ENCODE measurements at regions of chr19 and their contacts with region 1.

Region 1: DNA sequence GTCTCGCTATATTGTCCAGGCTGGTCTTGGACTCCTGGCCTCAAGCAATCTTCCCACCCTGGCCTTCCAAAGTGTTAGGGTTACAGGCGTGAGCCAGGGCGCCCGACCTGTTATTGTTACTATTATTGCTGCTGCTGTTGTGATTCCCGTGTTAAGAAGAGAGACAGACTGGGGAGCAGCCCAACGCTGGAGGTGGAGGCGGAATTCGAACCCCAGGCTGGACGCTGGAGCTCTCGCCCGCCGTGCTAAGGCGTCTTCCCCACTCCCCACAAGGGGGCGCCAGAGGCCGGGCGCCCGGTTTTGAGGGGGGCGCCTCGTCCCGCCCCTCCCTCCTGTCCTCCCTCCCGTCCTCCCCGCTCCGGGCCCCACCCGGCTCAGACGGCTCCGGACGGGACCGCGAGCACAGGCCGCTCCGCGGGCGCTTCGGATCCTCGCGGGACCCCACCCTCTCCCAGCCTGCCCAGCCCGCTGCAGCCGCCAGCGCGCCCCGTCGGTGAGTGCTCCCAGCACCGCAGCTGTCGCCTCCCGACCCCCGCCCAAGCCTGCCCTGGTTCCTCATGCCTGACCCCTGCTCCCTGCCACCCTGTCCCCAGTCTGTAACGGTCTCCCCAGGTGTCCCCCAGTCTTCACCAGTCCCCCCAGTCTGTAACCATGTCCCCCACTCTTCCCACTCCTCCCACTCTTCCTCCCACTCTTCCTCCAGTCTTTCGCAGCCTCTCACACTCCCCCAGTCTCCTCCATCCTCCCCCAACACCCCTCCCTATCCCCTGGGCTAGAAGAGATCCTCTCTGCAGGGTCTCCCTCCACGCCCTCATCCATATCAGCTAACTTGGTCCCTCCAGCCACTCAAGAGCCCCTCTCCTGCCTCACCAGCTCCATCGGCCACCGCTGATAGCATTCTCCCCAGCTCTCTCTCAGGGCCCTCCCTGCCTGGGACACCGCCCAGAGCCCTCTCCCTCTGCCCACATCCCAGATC is at the start of gene EHD2:
- DNase-seq: peak; percentile 59 to 68
- H3K4me3 ChIP-seq: peak within 1 kb of the TSS; percentile 53 to 72 (median 69)
- H3K27ac ChIP-seq: peak within 1 kb of the TSS; percentile 77 to 91 (median 82)
- H3K4me1 ChIP-seq: peaks cover 0 to 2% of the 10 kb centered on the region in 2 donors
- H3K27me3 ChIP-seq: no peaks in the 10 kb centered on the region
- CTCF ChIP-seq: peak; percentile 86 to 98 (median 96)
- POLR2A ChIP-seq: peak; percentile 41 to 70
- total RNA-seq, gene EHD2: 41.9 to 48.0 (median 44.3) TPM

Region 2: GRCh38 chr19:47663841-47664771 is 49.2 kb before region 1 on chr19:
- intact Hi-C with region 1: no loop called
- DNase-seq: peak; percentile 36 to 37
- H3K4me3 ChIP-seq: no peak overlapping the region
- H3K27ac ChIP-seq: peak overlapping the region; percentile 67 to 71 (median 70)
- H3K4me1 ChIP-seq: peaks cover 5 to 33% of the 10 kb centered on the region in 2 donors
- H3K27me3 ChIP-seq: no peaks in the 10 kb centered on the region
- CTCF ChIP-seq: no peak
- POLR2A ChIP-seq: no peak

Region 3: GRCh38 chr19:47745010-47745901 is 31.9 kb after region 1 on chr19 and contains the start of gene NOP53:
- intact Hi-C with region 1: loop called (anchors 5 kb)
- DNase-seq: peak; percentile 96 to 97
- H3K4me3 ChIP-seq: peak within 1 kb of the TSS; percentile 49 to 93 (median 71)
- H3K27ac ChIP-seq: peak within 1 kb of the TSS; percentile 91 to 99 (median 98)
- H3K4me1 ChIP-seq: peaks cover 21 to 34% of the 10 kb centered on the region in 2 donors
- H3K27me3 ChIP-seq: no peaks in the 10 kb centered on the region
- CTCF ChIP-seq: peak in 2 of 6 experiments; percentile 14 to 31
- POLR2A ChIP-seq: peak in 1 of 2 donors; percentile 80
- total RNA-seq, gene NOP53: 278 to 531 (median 461) TPM

Region 4: DNA sequence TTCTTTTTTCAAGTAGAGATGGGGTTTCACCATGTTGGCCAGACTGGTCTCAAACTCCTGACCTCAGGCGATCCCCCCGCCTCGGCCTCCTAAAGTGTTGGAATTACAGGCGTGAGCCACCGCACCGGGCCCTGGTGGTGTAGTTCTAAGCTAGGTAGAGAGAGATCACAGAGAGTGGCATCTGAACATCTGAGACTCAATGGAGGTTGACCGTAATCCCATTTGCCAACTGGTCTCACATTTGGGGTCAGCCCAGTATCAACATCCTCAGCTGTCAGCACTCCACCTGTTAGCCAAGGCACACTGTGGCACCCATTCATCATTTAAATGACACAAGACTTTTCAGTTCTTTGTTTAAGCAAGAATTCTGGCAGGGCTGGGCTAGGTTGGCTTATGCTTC is 73.2 kb after region 1 on chr19:
- intact Hi-C with region 1: loop called (anchors 5 kb)
- DNase-seq: no peak
- H3K4me3 ChIP-seq: no peak overlapping the region
- H3K27ac ChIP-seq: no peak overlapping the region
- H3K4me1 ChIP-seq: peaks cover 0 to under 1% of the 10 kb centered on the region in 2 donors
- H3K27me3 ChIP-seq: no peaks in the 10 kb centered on the region
- CTCF ChIP-seq: no peak
- POLR2A ChIP-seq: no peak

Region 5: DNA sequence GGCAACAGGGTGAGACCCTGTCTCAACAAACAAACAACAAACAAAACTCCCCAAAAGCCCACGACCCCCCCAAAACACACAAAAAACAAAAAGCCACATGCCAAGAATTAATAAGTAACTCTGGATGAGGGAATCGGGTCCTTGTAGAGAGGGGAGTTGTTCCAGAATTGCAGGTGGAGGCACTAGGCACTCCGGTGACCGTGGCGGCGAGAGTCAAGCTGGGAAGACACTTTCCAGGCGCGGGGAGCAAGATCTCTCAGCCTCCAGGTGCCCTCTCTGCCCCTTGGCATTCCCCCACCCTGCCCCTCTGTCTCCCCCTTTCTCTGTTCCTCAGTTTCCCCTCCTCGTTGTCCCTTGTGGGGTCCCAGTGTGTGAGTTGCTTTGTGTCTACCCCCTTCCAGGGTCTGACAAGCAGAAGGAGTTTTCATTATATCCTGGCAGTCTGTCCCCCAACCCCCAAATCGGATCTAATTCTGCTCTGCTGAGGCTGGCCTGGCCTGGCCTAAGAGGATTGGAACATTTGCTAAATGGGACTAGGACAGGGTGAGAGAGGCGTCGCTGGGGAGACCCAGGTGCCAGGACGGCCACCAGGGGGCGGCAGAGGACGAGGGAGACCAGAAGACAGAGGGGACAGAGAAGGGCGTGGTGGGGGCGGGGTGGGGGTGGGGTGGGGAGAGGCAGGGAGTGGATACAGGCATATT is 100.1 kb after region 1 on chr19:
- intact Hi-C with region 1: no loop called
- DNase-seq: peak; percentile 53 to 59
- H3K4me3 ChIP-seq: no peak overlapping the region
- H3K27ac ChIP-seq: no peak overlapping the region
- H3K4me1 ChIP-seq: no peaks in the 10 kb centered on the region
- H3K27me3 ChIP-seq: no peaks in the 10 kb centered on the region
- CTCF ChIP-seq: peak in 3 of 6 experiments; percentile 21 to 55 (median 26)
- POLR2A ChIP-seq: no peak

Measured in thyroid gland (tissue), 4 donors.